ENCODE measurements at regions of chr12 and their contacts with region 1.

Region 1: GRCh38 chr12:45990468-45991283 is at the start of gene SCAF11:
- DNase-seq: peak; percentile 98
- ATAC-seq: peak; percentile 86
- H3K4me3 ChIP-seq: peak within 1 kb of the TSS; percentile 80 to 90 (median 86)
- H3K27ac ChIP-seq: peak within 1 kb of the TSS; percentile 98
- H3K4me1 ChIP-seq: peaks cover 41% of the 10 kb centered on the region
- H3K27me3 ChIP-seq: no peaks in the 10 kb centered on the region
- CTCF ChIP-seq: peak; percentile 100
- EP300 ChIP-seq: peak in 1 of 2 experiments; percentile 58; a peak in 2 of 4 replicates
- POLR2A ChIP-seq: peak; percentile 85 to 97
- RAD21 ChIP-seq: peak; percentile 95
- total RNA-seq, gene SCAF11: 38.3 and 74.7 TPM in 2 replicates

Region 2: DNA sequence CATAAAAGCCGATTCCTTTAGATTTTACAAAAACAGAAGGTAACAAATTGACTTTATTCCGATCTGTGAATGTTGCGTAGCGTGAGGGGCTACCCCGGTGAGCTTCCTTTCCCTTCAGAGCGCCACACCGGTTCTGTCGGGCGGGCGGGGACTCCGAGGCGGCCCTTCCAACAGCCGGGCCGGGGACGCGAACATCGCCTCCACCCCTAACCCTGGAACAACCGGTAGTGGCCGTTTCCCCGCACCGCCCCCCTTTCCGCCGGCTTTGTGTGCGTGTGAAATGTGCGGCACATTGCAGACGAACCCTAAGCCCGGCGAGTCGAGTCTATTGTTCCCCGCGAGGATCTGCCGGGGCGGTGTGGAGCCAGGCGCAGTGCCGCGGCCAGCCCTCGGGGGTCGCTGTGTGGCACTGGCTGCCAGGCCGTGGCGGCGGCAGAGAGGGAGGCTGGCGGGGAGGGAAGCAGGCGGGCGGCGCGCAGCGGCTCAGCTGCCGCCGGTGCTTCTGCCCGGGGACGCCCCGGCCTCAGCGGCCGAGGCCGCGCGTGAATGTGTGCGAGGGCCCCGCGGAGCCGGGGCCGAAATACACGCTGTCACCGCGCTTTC is 261.9 kb before region 1 on chr12:
- CTCF ChIA-PET with region 1: no interaction called
- POLR2A ChIA-PET with region 1: interaction called, 24 read pairs
- in situ Hi-C with region 1: no loop called
- intact Hi-C with region 1: loop called (anchors 5 kb)
- DNase-seq: peak; percentile 92
- ATAC-seq: peak; percentile 78
- H3K4me3 ChIP-seq: peak overlapping the region; percentile 97 to 99 (median 98)
- H3K27ac ChIP-seq: peak overlapping the region; percentile 95
- H3K4me1 ChIP-seq: peaks cover 35% of the 10 kb centered on the region
- H3K27me3 ChIP-seq: no peaks in the 10 kb centered on the region; a peak in 1 of 5 replicates
- CTCF ChIP-seq: peak; percentile 95
- EP300 ChIP-seq: peak; percentile 26 to 39; a peak in 2 of 4 replicates
- POLR2A ChIP-seq: peak; percentile 83 to 87
- RAD21 ChIP-seq: peak; percentile 82

Region 3: DNA sequence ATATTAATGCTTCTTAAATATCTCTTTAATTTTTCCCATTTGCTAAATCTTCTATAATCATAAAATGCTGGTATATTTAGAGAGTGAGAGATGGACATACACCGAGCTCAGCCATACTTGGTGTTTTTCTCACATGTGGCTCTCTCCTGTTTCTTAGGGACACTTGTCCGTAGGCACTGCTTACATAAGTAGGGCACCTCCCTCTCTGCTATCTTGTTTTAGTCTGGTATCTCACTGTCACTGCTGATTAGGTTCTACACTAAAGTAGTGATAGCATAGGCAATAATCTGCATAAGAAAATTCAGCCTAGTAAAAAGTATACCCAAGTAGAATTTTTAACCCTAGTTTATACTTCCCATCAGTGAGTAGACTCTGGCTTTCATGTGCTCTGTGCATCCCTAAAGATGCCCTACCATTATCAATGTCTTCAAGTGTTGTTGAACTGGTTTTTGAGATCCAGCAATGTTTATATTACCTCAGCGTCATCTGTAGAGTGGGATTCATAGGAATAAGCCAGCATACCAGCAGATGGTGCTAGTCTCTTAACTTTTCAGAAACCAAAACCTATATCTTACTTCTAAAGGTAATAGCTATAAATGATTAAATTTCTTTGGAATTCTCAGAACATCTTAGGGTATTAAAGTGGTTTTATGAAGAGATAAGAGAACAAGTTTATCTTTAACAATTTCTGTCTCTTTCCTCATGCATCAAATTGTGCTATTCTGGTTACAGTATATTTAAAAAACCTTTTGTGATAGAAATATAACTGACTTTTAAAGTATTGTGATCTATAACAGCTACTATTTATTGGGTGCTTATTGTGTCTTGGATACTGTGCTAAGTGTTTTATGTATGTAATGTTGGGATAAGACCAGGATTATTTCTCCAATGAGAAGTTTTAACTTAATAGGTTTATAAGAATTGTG is 228.2 kb before region 1 on chr12:
- CTCF ChIA-PET with region 1: no interaction called
- POLR2A ChIA-PET with region 1: no interaction called
- in situ Hi-C with region 1: no loop called
- intact Hi-C with region 1: loop called (anchors 10 kb)
- DNase-seq: peak; percentile 28
- ATAC-seq: peak; percentile 80
- H3K4me3 ChIP-seq: no peak overlapping the region
- H3K27ac ChIP-seq: peak overlapping the region; percentile 61
- H3K4me1 ChIP-seq: peaks cover 18% of the 10 kb centered on the region
- H3K27me3 ChIP-seq: no peaks in the 10 kb centered on the region
- CTCF ChIP-seq: peak; percentile 61
- EP300 ChIP-seq: no peak
- POLR2A ChIP-seq: no peak
- RAD21 ChIP-seq: no peak

Region 4: DNA sequence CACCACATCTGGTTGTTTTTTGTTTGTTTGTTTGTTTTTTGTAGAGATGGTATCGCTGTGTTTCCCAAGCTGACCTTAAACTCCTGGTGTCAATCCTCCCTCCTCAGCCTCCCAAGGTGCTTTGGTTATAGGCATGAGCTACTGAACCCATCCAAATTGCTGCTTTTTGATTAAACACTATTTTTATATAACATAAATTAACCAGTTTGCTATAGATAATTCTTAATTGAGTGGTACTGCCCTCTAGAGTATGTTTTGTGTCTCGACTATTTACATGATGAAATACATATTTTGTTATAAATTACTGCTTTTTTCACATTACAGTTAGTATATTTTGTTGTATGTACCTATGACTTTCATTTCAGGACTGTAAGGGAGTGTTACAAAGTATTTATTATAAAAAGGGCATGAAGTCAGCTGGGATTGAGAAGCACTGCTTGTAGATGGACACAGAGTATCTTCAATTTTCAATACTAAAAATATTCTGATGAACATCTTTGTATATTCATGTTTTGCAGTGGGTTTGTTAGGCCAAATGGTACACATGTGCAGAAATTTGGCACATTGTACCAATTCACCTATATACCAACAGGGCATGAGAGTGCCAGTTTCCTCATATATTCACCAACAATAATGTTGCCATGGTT is 14.6 kb after region 1 on chr12:
- CTCF ChIA-PET with region 1: no interaction called
- POLR2A ChIA-PET with region 1: no interaction called
- in situ Hi-C with region 1: no loop called
- intact Hi-C with region 1: no loop called
- DNase-seq: no peak
- ATAC-seq: no peak
- H3K4me3 ChIP-seq: no peak overlapping the region
- H3K27ac ChIP-seq: no peak overlapping the region
- H3K4me1 ChIP-seq: peaks cover 8% of the 10 kb centered on the region; the same call in 1 of the 2 replicates
- H3K27me3 ChIP-seq: no peaks in the 10 kb centered on the region
- CTCF ChIP-seq: no peak
- EP300 ChIP-seq: no peak
- POLR2A ChIP-seq: no peak
- RAD21 ChIP-seq: no peak

Region 5: DNA sequence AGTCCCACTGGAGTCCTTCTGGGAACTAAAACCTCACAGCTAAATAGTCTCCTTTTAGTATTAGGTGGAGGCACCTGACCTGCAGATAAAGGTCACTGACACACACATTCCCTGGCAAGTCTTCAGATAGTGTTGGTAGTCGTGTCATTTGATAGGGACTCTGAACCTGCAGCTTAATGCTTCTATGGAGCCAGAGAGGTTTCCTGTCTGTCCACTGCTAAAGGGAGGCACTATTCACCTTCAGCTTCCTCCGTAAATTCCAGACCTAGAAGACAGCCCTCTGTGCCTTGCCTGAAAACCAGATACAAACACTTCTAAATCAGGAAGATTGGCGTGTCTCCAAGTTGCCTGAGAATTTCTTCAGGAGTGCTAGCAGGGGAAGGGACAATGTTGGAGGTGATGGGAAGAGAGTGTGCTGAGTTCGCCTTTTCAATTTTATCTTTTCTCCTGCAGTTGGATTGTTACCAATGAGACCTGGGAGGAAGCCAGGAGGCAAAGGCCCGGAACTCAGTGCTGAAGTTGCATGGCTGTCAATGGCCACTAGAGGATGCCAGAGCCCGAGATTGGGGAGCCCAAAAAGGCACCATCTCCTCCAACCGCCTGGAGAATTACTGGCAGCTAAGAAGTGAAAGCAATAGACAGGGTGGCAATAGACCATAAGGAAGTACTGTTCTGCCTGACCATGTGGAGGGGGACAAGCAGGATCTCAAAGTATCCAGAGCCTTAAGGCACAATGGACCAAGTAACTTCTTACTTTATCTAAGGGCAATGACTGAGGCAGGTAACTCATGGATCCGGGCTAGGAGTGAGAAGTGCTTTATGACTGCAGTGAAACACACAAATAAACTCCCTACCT is 81.3 kb after region 1 on chr12:
- CTCF ChIA-PET with region 1: no interaction called
- POLR2A ChIA-PET with region 1: interaction called, 10 read pairs
- in situ Hi-C with region 1: no loop called
- intact Hi-C with region 1: loop called (anchors 1 kb)
- DNase-seq: peak; percentile 46
- ATAC-seq: peak; percentile 99
- H3K4me3 ChIP-seq: peak overlapping the region; percentile 34 to 45 (median 41); a peak in 5 of 6 replicates
- H3K27ac ChIP-seq: no peak overlapping the region
- H3K4me1 ChIP-seq: peaks cover 8% of the 10 kb centered on the region
- H3K27me3 ChIP-seq: no peaks in the 10 kb centered on the region; a peak in 1 of 5 replicates
- CTCF ChIP-seq: peak; percentile 94
- EP300 ChIP-seq: no peak
- POLR2A ChIP-seq: no peak
- RAD21 ChIP-seq: peak; percentile 73

Region 6: GRCh38 chr12:46268590-46269558 is 278.2 kb after region 1 on chr12 and contains the start of gene SLC38A1:
- CTCF ChIA-PET with region 1: no interaction called
- POLR2A ChIA-PET with region 1: interaction called, 12 read pairs
- in situ Hi-C with region 1: no loop called
- intact Hi-C with region 1: loop called (anchors 10 kb)
- DNase-seq: peak; percentile 74
- ATAC-seq: peak; percentile 89
- H3K4me3 ChIP-seq: peak within 1 kb of the TSS; percentile 85 to 91 (median 90)
- H3K27ac ChIP-seq: peak within 1 kb of the TSS; percentile 67
- H3K4me1 ChIP-seq: peaks cover 54% of the 10 kb centered on the region
- H3K27me3 ChIP-seq: no peaks in the 10 kb centered on the region; a peak in 1 of 5 replicates
- CTCF ChIP-seq: peak; percentile 54
- EP300 ChIP-seq: peak in 1 of 2 experiments; percentile 36; a peak in 1 of 4 replicates
- POLR2A ChIP-seq: peak; percentile 74 to 84
- RAD21 ChIP-seq: no peak
- total RNA-seq, gene SLC38A1: 47.0 and 49.8 TPM in 2 replicates

Region 7: DNA sequence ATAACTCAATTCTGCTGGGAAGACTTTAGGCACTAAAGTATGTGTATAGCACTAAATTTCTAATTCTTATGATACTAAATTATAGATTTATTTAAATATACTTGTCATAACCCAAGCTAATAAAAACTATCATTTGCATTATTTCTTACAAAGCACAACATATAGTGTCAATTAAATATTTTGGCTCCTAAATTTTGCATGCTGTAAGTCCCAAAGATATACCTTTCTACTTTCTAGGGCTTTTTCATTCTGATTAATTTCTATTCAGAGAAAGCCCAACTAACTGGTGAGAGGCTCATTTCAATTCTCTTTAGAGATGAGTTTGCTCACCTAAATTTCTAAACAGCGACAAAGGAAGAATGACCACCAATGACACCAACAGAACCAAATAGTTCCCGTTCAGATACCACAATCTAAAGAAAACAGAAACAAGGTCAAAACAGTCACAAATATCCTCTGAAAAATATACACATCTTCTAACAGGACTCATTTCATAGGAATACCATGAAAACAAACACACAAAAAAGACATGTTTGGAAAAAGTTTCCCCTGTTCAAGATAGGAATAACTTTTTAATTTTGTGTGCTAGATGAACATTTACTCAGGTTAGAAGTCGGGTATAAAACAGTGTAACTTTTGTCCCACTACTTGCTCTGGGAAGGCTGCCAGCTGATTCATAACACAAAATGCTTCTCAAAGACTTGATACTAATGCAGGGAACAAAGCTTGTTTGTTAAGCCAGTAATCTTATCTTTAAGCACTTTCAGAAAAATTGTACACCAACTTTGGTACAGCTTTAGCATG is 374.3 kb after region 1 on chr12:
- CTCF ChIA-PET with region 1: no interaction called
- POLR2A ChIA-PET with region 1: no interaction called
- in situ Hi-C with region 1: no loop called
- intact Hi-C with region 1: loop called (anchors 10 kb)
- DNase-seq: peak; percentile 78
- ATAC-seq: no peak; the same call in 2 of the 3 replicates
- H3K4me3 ChIP-seq: peak overlapping the region; percentile 5 to 94 (median 84); a peak in 4 of 6 replicates
- H3K27ac ChIP-seq: peak overlapping the region; percentile 97
- H3K4me1 ChIP-seq: peaks cover 67% of the 10 kb centered on the region
- H3K27me3 ChIP-seq: no peaks in the 10 kb centered on the region
- CTCF ChIP-seq: no peak
- EP300 ChIP-seq: 0 out of 4 replicates have a peak, but pooled peaks of 1 of the 2 experiments have one; percentile 14
- POLR2A ChIP-seq: peak; percentile 19 to 35; a peak in 2 of 4 replicates
- RAD21 ChIP-seq: 0 out of 2 replicates have a peak, but pooled peaks have one; percentile 9